ENCODE measurements at regions of chr3 and their contacts with region 1.

Region 1: DNA sequence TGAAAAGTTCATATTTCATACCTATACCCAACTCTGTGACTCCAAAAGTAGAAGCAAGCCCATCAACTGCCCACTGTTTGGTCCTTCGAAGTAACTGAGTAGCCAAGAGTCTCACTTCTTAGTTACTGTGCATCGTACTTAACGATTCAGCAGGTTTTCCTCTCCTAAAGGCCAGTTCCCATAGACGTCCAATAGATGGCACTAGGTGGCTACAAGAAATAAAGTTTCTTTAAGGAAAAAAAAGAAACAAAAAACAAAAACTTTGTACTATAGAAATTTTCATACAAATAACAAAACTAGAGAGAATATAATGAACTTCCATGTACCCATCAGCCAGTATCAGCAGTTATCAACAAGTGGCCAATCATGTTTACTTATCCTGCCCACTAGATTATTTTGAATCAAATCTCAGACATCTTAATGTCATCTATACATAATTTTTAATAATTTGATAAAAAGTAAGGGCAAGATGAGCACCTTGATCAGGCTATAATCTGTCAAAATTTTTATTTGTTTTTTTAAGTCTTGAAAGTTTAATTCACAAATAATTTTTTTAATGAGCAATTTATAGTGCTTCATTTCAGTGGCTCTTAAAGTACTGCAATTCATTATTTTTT is 63.8 kb upstream of the ACP3 start:
- DNase-seq: peak in 1 of 2 donors; percentile 19
- ATAC-seq: peak in 1 of 8 donors; percentile 46
- H3K4me3 ChIP-seq: no peak overlapping the region
- H3K27ac ChIP-seq: no peak overlapping the region
- H3K4me1 ChIP-seq: peaks cover 0 to 14% (median 0%) of the 10 kb centered on the region in 9 donors
- H3K27me3 ChIP-seq: peaks cover 0 to 10% (median 5%) of the 10 kb centered on the region in 7 donors
- CTCF ChIP-seq: peak; percentile 27 to 81 (median 70)

Region 2: DNA sequence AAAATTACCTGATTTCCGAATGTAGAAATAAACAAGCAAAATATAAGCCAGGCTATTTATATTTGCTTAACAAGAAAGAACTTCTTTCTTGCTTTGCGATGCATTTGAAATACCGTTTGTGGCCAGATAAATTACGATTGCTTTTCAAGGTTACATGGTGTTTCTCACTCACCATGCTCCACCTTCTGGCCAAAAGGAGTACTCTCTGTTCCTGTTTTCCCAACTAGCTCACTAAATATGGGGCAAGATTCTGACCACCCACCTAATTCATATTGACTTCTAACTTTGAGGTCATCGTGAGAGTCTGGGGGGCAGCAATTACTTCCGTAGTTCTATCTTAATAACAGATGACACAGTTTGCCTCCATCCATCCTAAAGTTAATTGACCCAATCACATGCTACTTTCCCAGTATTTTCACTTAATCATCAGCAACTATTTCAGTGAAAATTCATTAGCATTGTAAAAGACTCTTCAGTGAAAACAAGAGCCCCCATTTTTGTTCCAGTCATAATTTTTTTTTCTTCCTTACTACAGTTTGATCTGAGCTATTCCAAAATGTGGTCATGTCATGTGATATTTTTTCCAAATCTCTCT is 89.7 kb after region 1 on chr3:
- intact Hi-C with region 1: loop called (anchors 1 to 10 kb)
- DNase-seq: peak in 1 of 2 donors; percentile 52
- ATAC-seq: peak in 5 of 8 donors; percentile 56 to 69 (median 65)
- H3K4me3 ChIP-seq: peak overlapping the region in 1 of 10 donors; percentile 12
- H3K27ac ChIP-seq: no peak overlapping the region
- H3K4me1 ChIP-seq: peaks cover 0 to 25% (median 0%) of the 10 kb centered on the region in 9 donors
- H3K27me3 ChIP-seq: no peaks in the 10 kb centered on the region
- CTCF ChIP-seq: peak; percentile 50 to 82 (median 75)

Region 3: DNA sequence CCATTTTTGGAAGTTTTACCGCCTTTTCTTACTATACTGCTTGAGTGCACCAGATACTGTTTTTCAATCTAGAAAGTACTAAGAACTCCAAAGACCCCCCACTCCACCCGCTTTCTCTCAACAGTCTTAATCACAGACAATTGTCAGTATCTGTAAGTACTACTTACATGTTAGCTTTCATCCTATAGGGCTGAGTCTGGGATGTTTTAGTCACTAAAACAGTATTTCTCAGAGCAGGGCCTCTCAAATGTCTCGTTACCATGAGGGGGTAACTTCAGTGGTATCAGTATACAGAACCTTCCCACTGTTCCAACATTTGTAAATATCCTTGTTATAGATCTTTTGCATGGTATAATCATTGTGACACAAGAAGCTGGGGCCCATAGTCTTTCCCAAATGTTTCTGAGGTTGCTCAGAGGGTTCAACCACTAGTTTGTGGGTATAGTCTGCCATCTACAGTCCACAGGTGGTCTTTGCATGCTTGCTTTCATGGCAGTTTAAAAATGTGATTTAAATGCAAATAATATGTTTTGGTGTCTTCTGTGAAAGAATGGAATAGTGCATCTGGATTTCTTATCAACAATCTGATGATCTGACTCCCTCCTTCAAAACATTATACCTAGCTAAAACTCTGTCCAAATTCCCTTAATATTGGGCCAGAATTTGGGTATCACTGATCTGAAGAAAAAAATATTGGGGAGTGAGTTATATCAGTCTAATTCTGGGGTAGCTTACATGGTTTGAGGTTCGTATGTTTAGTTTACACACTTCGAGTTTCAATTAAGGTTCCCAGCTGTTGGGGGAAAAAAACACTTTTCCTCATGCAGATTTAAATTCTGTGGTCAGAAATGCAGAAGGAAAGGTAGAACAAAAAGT is 145.9 kb after region 1 on chr3:
- intact Hi-C with region 1: loop called in 8 of 10 experiments (anchors 2 to 10 kb)
- DNase-seq: peak in 1 of 2 donors; percentile 20
- ATAC-seq: peak in 3 of 8 donors; percentile 61 to 79 (median 63)
- H3K4me3 ChIP-seq: no peak overlapping the region
- H3K27ac ChIP-seq: no peak overlapping the region
- H3K4me1 ChIP-seq: peaks cover 0 to 2% (median 0%) of the 10 kb centered on the region in 9 donors
- H3K27me3 ChIP-seq: no peaks in the 10 kb centered on the region
- CTCF ChIP-seq: peak; percentile 58 to 82 (median 77)

Region 4: DNA sequence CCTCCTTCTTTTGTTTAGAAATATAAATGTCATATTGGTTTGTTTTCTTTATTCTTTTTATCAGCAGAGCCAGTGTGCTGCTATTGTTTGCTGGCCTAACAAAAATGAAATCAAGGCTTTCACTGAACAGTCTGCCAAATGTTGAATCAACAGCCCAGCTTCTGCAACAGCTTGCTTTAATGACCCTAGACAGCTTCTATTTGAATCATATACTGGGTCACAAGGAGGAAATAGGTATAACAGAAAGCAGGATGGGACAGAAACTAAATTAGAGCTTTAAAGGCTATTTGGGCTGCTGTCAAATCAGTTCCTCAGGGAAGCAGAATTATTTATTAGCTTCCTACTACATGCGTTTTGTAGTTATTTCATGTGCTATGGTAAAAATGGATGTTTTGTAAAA is 151.8 kb after region 1 on chr3:
- intact Hi-C with region 1: loop called in 3 of 10 experiments (anchors 5 to 10 kb)
- DNase-seq: no peak
- ATAC-seq: peak in 6 of 8 donors; percentile 38 to 58 (median 49)
- H3K4me3 ChIP-seq: no peak overlapping the region
- H3K27ac ChIP-seq: peak overlapping the region in 1 of 10 donors; percentile 8
- H3K4me1 ChIP-seq: peaks cover 0 to 27% (median 11%) of the 10 kb centered on the region in 9 donors
- H3K27me3 ChIP-seq: no peaks in the 10 kb centered on the region
- CTCF ChIP-seq: no peak

Region 5: GRCh38 chr3:132416807-132417694 is 163.7 kb after region 1 on chr3 and contains the start of gene DNAJC13:
- intact Hi-C with region 1: loop called in 1 of 10 experiments (anchors 10 kb)
- DNase-seq: peak; percentile 92 to 93
- ATAC-seq: peak; percentile 98 to 99 (median 98)
- H3K4me3 ChIP-seq: peak within 1 kb of the TSS; percentile 88 to 100 (median 96)
- H3K27ac ChIP-seq: peak within 1 kb of the TSS; percentile 65 to 96 (median 90)
- H3K4me1 ChIP-seq: peaks cover 2 to 44% (median 22%) of the 10 kb centered on the region in 9 donors
- H3K27me3 ChIP-seq: no peaks in the 10 kb centered on the region
- CTCF ChIP-seq: no peak
- total RNA-seq, gene DNAJC13: 26.7 to 40.5 (median 34.0) TPM

Measured in heart right ventricle (tissue), 16 donors.